T-cell (primary cell): ENCODE measurements at regions of chr12 and their contacts with region 1.

Region 1: GRCh38 chr12:112307317-112308011 is 74.8 kb downstream of the HECTD4 start:
- DNase-seq: no peak
- ATAC-seq: no peak
- H3K4me3 ChIP-seq: no peak overlapping the region
- H3K4me3 Mint-ChIP-seq: no peak overlapping the region
- H3K27ac ChIP-seq: no peak overlapping the region
- H3K27ac Mint-ChIP-seq: no peak overlapping the region
- H3K4me1 ChIP-seq: no peaks in the 10 kb centered on the region
- H3K4me1 Mint-ChIP-seq: peaks cover 0 to 8% (median 7%) of the 10 kb centered on the region in 3 donors
- H3K27me3 ChIP-seq: no peaks in the 10 kb centered on the region
- H3K27me3 Mint-ChIP-seq: no peaks in the 10 kb centered on the region

Region 2: GRCh38 chr12:112322882-112323547 is 15.6 kb after region 1 on chr12:
- CTCF ChIA-PET with region 1: no interaction called
- POLR2A ChIA-PET with region 1: interaction called in 1 of 2 experiments, 14 read pairs
- DNase-seq: no peak
- ATAC-seq: no peak
- H3K4me3 ChIP-seq: no peak overlapping the region
- H3K4me3 Mint-ChIP-seq: no peak overlapping the region
- H3K27ac ChIP-seq: no peak overlapping the region
- H3K27ac Mint-ChIP-seq: peak overlapping the region in 1 of 2 donors; percentile 17
- H3K4me1 ChIP-seq: peaks cover 0 to 4% of the 10 kb centered on the region in 2 experiments
- H3K4me1 Mint-ChIP-seq: peaks cover 17 to 32% (median 31%) of the 10 kb centered on the region in 3 donors
- H3K27me3 ChIP-seq: no peaks in the 10 kb centered on the region
- H3K27me3 Mint-ChIP-seq: no peaks in the 10 kb centered on the region